ENCODE measurements at regions of chr17 and their contacts with region 1.

Region 1: GRCh38 chr17:78313735-78314648 is 45.9 kb downstream of the SOCS3 start:
- DNase-seq: peak; percentile 84
- ATAC-seq: peak; percentile 77
- H3K4me3 Mint-ChIP-seq: peak overlapping the region; percentile 71
- H3K27ac Mint-ChIP-seq: peak overlapping the region; percentile 58; the same call in 1 of the 2 replicates
- H3K4me1 Mint-ChIP-seq: peaks cover 46% of the 10 kb centered on the region
- H3K27me3 Mint-ChIP-seq: peaks cover 6% of the 10 kb centered on the region
- CTCF ChIP-seq: no peak

Region 2: GRCh38 chr17:78341559-78342448 is 27.8 kb after region 1 on chr17:
- CTCF ChIA-PET with region 1: interaction called, 14 read pairs
- POLR2A ChIA-PET with region 1: interaction called, 6 read pairs
- DNase-seq: peak; percentile 75
- ATAC-seq: peak; percentile 57
- H3K4me3 Mint-ChIP-seq: peak overlapping the region; percentile 56
- H3K27ac Mint-ChIP-seq: no peak overlapping the region
- H3K4me1 Mint-ChIP-seq: peaks cover 25% of the 10 kb centered on the region
- H3K27me3 Mint-ChIP-seq: peaks cover 19% of the 10 kb centered on the region
- CTCF ChIP-seq: no peak

Measured in WTC11 (cell line).